RWPE1 (cell line): ENCODE measurements at regions of chr20 and their contacts with region 1.

Region 1: DNA sequence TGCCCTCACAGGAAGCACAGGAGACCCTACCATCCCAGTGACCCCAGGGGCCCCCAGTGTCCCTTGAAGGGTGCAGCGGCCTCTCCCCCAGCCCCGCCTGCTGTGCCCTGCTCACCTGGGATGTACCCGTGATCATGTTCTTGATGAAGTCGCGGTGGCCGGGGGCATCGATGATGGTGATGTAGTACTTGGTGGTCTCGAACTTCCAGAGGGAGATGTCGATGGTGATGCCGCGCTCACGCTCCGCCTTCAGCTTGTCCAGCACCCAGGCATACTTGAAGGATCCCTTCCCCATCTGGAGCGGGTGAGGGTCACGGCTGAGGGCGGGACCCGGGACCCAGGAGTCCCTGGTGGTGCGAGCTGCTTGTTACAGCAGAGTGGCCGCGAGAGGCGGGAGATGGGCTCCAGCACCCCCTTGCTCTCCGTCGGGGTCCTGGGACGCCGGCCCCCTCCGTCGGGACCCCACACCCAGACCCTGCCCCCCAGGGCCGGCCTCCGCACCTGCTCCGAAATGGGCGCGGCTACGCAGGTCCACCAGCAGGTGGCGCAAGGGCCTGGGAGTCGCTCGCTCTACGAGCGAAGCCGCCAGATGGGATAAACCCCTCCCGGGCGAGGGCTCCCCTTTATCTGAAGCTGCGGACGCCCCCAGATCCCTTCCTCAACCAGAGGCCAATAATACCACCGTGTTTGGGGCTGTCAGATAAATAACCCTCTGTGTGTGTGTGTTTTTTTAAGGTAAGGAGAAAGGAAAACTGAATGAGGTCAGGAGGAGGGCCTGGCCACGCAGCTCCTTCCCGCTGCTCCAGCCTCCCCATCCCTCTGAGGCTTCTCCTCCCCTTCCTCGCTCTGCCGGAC is 2.9 kb downstream of the EEF1A2 start:
- DNase-seq: peak; percentile 84
- H3K27ac ChIP-seq: peak overlapping the region; percentile 6; the same call in 1 of the 2 replicates
- CTCF ChIP-seq: peak; percentile 100

Region 2: GRCh38 chr20:63321136-63321831 is 174.7 kb before region 1 on chr20:
- CTCF ChIA-PET with region 1: no interaction called
- POLR2A ChIA-PET with region 1: no interaction called
- DNase-seq: no peak
- H3K27ac ChIP-seq: no peak overlapping the region
- CTCF ChIP-seq: no peak

Region 3: DNA sequence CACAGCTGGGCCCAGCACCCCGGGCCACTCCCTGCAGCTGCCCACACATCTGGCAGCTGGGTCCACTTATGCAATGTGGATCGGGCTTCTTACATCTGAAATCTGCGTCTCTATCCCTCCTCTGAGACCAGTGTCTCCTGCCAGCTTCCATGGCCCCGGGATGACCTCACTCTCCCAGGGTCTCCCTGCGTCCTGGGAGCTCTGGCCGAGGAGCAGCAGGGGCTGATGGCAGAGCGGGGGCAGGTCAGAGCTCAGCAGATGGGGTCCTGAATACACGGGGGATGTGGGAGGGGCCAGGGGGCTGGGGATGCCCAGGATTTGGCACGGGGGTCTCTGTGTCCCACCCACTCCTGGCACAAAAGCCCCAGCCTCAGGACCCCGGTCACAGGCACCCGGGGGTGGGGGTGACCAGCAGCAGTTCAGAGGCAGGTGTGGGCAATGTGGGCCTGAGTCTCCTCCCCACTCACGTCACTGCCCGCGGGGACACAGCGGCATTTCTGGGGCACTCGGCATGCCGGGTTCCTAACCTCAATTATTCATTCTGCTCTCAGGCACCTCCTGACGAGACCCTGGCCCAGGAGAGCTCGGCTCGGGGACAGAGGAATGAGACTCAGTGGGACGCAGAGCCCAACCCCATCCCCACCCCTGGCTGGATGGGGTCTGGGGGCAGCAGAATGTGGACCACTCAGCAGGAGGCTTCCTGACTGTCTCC is 151.2 kb before region 1 on chr20:
- CTCF ChIA-PET with region 1: no interaction called
- POLR2A ChIA-PET with region 1: no interaction called
- DNase-seq: no peak
- H3K27ac ChIP-seq: no peak overlapping the region
- CTCF ChIP-seq: no peak

Region 4: GRCh38 chr20:63457737-63458136 is 38.2 kb before region 1 on chr20:
- CTCF ChIA-PET with region 1: interaction called, 11 read pairs
- POLR2A ChIA-PET with region 1: interaction called, 6 read pairs
- DNase-seq: peak; percentile 98
- H3K27ac ChIP-seq: peak overlapping the region; percentile 66
- CTCF ChIP-seq: no peak

Region 5: DNA sequence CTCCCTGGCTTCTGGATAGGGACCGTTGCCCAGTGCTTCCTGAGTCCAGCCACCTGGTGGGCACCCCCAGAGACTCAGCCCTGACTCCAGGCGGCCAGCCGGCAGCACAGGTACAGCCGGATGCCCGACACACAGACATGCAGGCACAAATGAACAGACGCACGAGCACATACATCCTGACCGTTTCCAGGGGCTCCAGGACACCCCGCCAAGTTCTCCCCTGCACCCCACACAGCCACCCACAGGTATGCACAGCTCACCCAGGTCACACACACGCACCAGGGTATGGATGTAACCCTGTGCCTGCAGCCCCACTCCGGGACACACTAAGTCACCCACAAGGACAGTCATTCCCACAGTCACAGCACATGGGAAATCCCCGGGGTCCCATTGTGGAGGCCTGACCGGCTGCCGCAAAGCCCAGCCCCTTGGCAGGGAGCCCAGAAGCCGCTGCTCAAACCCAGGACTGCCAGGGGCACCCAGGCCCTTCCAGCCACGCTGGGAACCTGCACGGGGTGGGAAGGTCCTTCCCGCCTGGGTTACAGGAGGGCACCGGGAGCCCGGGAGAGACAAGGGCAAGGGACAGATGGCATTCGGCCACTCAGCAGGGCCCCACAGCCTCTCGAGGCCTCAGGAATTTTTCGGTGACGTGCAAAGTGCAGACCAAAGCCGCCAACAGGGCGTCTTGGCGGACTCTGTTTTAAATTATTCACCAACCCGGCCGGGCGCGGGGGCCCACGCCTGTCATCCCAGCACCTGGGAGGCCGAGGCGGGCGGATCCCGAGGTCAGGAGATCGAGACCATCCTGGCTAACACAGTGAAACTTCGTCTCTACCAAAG is 12.9 kb before region 1 on chr20:
- CTCF ChIA-PET with region 1: interaction called, 11 read pairs
- POLR2A ChIA-PET with region 1: no interaction called
- DNase-seq: no peak
- H3K27ac ChIP-seq: no peak overlapping the region
- CTCF ChIP-seq: no peak

Region 6: DNA sequence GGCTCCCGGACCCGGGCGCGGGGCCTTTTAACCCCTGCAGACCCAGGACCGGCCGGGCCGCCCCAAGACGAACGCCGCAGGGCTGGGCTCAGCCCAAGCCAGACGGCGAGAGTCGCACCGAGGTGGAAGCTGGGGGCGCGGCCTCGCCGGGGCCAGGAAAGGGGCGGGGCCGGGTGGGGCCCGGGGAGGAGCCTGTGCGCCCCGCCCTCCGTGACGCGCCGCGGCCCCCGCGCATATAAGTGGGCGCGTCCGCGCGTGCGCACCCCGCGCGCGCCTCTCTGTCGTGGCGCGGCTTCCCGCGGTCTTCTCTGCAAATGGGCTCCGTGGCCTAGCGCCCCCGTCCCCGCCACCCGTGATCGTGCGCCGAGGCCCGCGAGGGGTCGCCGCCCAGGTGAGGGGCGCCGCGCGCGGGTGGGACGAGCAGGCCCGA is 24.6 kb after region 1 on chr20 and contains the start of gene PPDPF:
- CTCF ChIA-PET with region 1: interaction called, 20 read pairs
- POLR2A ChIA-PET with region 1: interaction called, 25 read pairs
- DNase-seq: peak; percentile 100
- H3K27ac ChIP-seq: peak within 1 kb of the TSS; percentile 92
- CTCF ChIP-seq: no peak

Region 7: DNA sequence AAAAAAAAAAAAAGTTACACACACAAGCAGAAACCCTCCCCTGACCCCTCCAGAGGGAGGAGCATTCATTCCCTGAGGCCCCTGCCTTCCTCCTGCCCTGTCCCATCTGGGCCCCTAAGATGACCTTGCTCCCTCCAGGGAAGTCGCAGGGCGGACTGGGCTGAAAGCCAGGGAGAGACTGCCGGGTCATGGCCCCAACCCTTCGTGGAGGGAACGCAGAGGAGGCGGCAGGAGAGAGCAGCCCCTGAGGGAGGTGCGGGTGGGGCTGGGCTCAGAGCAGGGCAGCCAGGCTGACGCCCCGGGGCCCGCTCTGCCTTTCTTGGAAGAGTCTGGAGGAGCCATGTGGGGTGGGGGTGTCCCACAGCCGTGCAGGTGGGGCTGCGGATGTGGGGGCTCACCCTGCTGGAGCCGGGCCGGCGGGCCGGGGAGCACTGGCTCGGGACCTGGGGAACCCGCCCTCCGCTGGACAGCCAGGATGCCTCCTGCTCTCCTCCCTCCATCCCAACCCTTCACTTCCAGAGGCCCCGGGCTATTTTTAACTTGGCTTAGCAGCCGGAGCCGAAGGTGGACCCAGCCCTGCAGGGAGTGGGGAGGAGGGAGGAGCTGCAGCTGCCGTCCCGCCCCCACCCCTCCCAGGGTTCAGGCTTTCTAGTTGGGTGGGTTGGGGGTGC is 350.3 kb after region 1 on chr20:
- CTCF ChIA-PET with region 1: no interaction called
- POLR2A ChIA-PET with region 1: no interaction called
- DNase-seq: peak; percentile 58
- H3K27ac ChIP-seq: peak overlapping the region; percentile 33; the same call in 1 of the 2 replicates
- CTCF ChIP-seq: no peak